Activated CD8-positive, alpha-beta T cell treated with anti-CD3 and anti-CD28 coated beads, Interleukin-2, amount 10 ng/mL, durations not matched to agents 7 days and 5 days (primary cell): ENCODE measurements at regions of chr10 and their contacts with region 1.

Region 1: GRCh38 chr10:110354322-110354766 is 49.6 kb upstream of the SMNDC1 start:
- DNase-seq: peak; percentile 88
- ATAC-seq: peak; percentile 77
- H3K4me3 Mint-ChIP-seq: peak overlapping the region; percentile 16
- H3K27ac Mint-ChIP-seq: peak overlapping the region; percentile 74
- H3K4me1 Mint-ChIP-seq: peaks cover 59% of the 10 kb centered on the region
- H3K27me3 Mint-ChIP-seq: peaks cover 16% of the 10 kb centered on the region

Region 2: DNA sequence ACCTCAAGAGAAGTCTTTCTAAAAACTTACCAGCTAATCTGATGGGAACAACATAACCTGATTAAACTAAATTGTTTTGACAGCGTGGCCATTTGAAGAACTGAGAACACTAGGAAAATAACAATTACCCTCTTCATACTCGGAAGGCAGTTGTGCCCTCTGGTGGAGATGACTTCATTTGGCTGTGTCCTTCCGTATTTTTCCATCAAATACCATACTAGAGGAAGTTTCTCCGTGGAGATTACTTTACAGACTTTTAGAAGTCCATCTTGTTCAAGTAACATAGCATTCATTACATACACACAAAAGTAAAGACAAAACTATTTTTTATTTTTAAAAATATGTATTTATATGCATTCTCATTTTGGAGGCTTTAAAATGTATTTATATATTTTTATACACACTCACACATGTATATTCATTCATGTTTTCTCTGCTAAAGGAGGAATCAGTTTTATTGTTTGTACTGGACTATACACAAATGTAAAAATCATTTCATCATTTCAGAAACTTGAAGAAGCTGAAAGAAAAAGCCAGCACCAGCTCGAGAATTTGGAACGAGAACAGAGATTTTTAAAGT is 74.8 kb before region 1 on chr10:
- CTCF ChIA-PET with region 1: no interaction called
- POLR2A ChIA-PET with region 1: no interaction called
- DNase-seq: peak; percentile 58
- ATAC-seq: peak; percentile 53
- H3K4me3 Mint-ChIP-seq: no peak overlapping the region
- H3K27ac Mint-ChIP-seq: no peak overlapping the region
- H3K4me1 Mint-ChIP-seq: peaks cover 17% of the 10 kb centered on the region
- H3K27me3 Mint-ChIP-seq: peaks cover 19% of the 10 kb centered on the region

Region 3: GRCh38 chr10:110311357-110311949 is 42.9 kb before region 1 on chr10:
- CTCF ChIA-PET with region 1: interaction called, 16 read pairs
- POLR2A ChIA-PET with region 1: no interaction called
- DNase-seq: peak; percentile 47
- ATAC-seq: peak; percentile 69
- H3K4me3 Mint-ChIP-seq: no peak overlapping the region
- H3K27ac Mint-ChIP-seq: no peak overlapping the region
- H3K4me1 Mint-ChIP-seq: peaks cover 18% of the 10 kb centered on the region
- H3K27me3 Mint-ChIP-seq: peaks cover 13% of the 10 kb centered on the region

Region 4: GRCh38 chr10:110336111-110336721 is 18.1 kb before region 1 on chr10:
- CTCF ChIA-PET with region 1: interaction called, 71 read pairs
- POLR2A ChIA-PET with region 1: no interaction called
- DNase-seq: no peak
- ATAC-seq: no peak
- H3K4me3 Mint-ChIP-seq: no peak overlapping the region
- H3K27ac Mint-ChIP-seq: peak overlapping the region; percentile 79
- H3K4me1 Mint-ChIP-seq: peaks cover 45% of the 10 kb centered on the region
- H3K27me3 Mint-ChIP-seq: peaks cover 11% of the 10 kb centered on the region

Region 5: DNA sequence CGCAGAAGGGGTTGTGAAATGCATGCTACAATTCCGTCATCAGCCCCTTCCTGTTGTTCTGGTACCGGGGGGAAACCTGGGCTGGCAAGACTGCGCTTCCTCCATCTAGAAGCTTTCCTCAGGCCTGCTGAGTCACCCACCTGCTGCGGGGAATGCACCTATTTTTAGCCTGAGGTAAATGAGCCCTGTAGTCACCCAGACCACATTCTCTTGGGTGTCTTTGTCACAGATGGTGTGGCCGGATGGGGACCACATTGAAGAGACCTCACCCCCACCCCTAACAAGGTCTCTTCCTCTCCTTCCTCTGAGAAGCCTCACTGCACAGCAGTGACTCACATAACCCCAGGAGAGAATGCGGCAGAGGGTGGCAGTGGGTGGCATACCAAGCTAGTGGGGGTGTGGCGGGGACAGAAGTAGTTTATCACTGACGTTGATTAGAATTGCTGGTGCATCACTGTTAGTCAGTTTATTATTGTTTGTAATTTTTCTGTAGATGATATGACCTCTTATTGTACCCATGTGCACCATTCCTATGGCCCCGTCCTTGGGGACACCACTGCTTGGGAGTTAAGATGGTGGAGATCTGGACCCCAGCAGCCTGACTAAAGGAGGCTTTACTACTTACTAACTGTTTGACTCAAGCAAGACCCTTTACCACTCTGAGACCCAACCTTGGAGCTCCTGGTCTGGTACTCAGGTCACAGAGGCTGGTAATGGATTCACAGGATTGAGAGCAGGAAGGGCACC is 60.4 kb after region 1 on chr10:
- CTCF ChIA-PET with region 1: interaction called, 23 read pairs
- POLR2A ChIA-PET with region 1: interaction called, 4 read pairs
- DNase-seq: peak; percentile 95
- ATAC-seq: peak; percentile 97
- H3K4me3 Mint-ChIP-seq: peak overlapping the region; percentile 31
- H3K27ac Mint-ChIP-seq: peak overlapping the region; percentile 82
- H3K4me1 Mint-ChIP-seq: peaks cover 51% of the 10 kb centered on the region
- H3K27me3 Mint-ChIP-seq: peaks cover 2% of the 10 kb centered on the region

Region 6: GRCh38 chr10:110547139-110547761 is 192.9 kb after region 1 on chr10:
- CTCF ChIA-PET with region 1: interaction called, 94 read pairs
- POLR2A ChIA-PET with region 1: interaction called, 5 read pairs
- DNase-seq: peak; percentile 45
- ATAC-seq: peak; percentile 76
- H3K4me3 Mint-ChIP-seq: no peak overlapping the region
- H3K27ac Mint-ChIP-seq: no peak overlapping the region
- H3K4me1 Mint-ChIP-seq: peaks cover 13% of the 10 kb centered on the region
- H3K27me3 Mint-ChIP-seq: peaks cover 24% of the 10 kb centered on the region